ENCODE measurements at regions of chr18 and their contacts with region 1.

Region 1: GRCh38 chr18:10936176-10937053 is 213.0 kb downstream of the PIEZO2 start:
- DNase-seq: no peak
- H3K4me3 ChIP-seq: no peak overlapping the region
- H3K4me3 Mint-ChIP-seq: no peak overlapping the region
- H3K27ac ChIP-seq: no peak overlapping the region
- H3K27ac Mint-ChIP-seq: no peak overlapping the region
- H3K4me1 ChIP-seq: no peaks in the 10 kb centered on the region
- H3K4me1 Mint-ChIP-seq: no peaks in the 10 kb centered on the region
- H3K27me3 ChIP-seq: no peaks in the 10 kb centered on the region
- H3K27me3 Mint-ChIP-seq: peaks cover 2 to 3% of the 10 kb centered on the region in 2 donors

Region 2: GRCh38 chr18:10194605-10195004 is 741.8 kb before region 1 on chr18:
- CTCF ChIA-PET with region 1: no interaction called
- POLR2A ChIA-PET with region 1: no interaction called
- intact Hi-C with region 1: no loop called
- DNase-seq: no peak
- H3K4me3 ChIP-seq: no peak overlapping the region
- H3K4me3 Mint-ChIP-seq: no peak overlapping the region
- H3K27ac ChIP-seq: no peak overlapping the region
- H3K27ac Mint-ChIP-seq: no peak overlapping the region
- H3K4me1 ChIP-seq: no peaks in the 10 kb centered on the region
- H3K4me1 Mint-ChIP-seq: no peaks in the 10 kb centered on the region
- H3K27me3 ChIP-seq: no peaks in the 10 kb centered on the region
- H3K27me3 Mint-ChIP-seq: peaks cover 0 to 3% of the 10 kb centered on the region in 2 donors

Region 3: GRCh38 chr18:10995550-10995949 is 59.1 kb after region 1 on chr18:
- CTCF ChIA-PET with region 1: no interaction called
- POLR2A ChIA-PET with region 1: no interaction called
- intact Hi-C with region 1: loop called (anchors 10 kb)
- DNase-seq: no peak
- H3K4me3 ChIP-seq: no peak overlapping the region
- H3K4me3 Mint-ChIP-seq: no peak overlapping the region
- H3K27ac ChIP-seq: no peak overlapping the region
- H3K27ac Mint-ChIP-seq: no peak overlapping the region
- H3K4me1 ChIP-seq: no peaks in the 10 kb centered on the region
- H3K4me1 Mint-ChIP-seq: no peaks in the 10 kb centered on the region
- H3K27me3 ChIP-seq: no peaks in the 10 kb centered on the region
- H3K27me3 Mint-ChIP-seq: peaks cover 0 to 1% of the 10 kb centered on the region in 2 donors